Naive thymus-derived CD4-positive, alpha-beta T cell (primary cell): ENCODE measurements at regions of chr1 and their contacts with region 1.

Region 1: DNA sequence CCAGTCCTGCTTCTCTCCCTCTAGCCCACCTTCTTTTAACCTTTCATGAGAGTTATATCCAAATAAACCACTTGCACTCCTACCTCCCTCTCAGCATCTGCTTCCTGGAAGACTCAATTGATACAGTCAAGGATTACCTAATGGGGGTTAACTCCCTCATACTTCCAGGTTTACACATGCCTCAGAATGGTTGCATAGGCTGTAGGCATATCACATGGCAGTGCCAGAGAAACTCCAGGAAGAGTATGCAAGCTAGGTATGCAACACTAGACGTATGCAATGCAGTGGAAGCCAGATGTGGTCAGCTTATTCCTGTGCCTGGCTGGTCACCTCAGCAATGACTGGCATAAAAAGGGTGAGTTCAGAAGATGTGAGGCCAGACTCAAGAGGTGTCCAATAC is 32.7 kb upstream of the VANGL1 start:
- DNase-seq: no peak
- ATAC-seq: no peak
- H3K4me3 ChIP-seq: no peak overlapping the region
- H3K4me3 Mint-ChIP-seq: no peak overlapping the region
- H3K27ac ChIP-seq: no peak overlapping the region
- H3K27ac Mint-ChIP-seq: peak overlapping the region in 1 of 9 donors; percentile 14
- H3K4me1 ChIP-seq: no peaks in the 10 kb centered on the region
- H3K4me1 Mint-ChIP-seq: peaks cover 0 to 2% (median 0%) of the 10 kb centered on the region in 7 donors
- H3K27me3 ChIP-seq: no peaks in the 10 kb centered on the region
- H3K27me3 Mint-ChIP-seq: peaks cover 4 to 19% (median 12%) of the 10 kb centered on the region in 5 donors

Region 2: DNA sequence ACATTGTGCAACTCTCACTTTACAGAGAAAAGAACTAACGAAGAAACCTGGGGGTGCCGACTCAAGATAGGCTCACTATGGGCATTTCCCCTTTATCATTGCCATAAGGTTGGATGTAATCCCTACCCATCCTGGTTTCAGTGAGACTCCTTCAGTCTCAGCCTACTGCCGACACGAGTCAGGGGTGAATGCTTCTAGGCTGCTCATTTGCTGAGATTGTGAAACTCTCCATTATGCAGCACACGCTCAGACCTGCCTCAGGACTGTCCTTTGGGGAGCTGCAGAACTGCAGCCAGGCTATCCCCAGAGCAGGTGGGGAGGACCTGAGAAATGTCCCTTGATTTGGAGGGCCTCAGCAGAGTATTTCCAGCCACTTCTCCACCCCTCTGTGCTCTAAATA is 557.2 kb before region 1 on chr1:
- CTCF ChIA-PET with region 1: no interaction called
- POLR2A ChIA-PET with region 1: no interaction called
- intact Hi-C with region 1: no loop called
- DNase-seq: no peak
- ATAC-seq: peak; percentile 24
- H3K4me3 ChIP-seq: no peak overlapping the region
- H3K4me3 Mint-ChIP-seq: no peak overlapping the region
- H3K27ac ChIP-seq: no peak overlapping the region
- H3K27ac Mint-ChIP-seq: no peak overlapping the region
- H3K4me1 ChIP-seq: no peaks in the 10 kb centered on the region
- H3K4me1 Mint-ChIP-seq: peaks cover 0 to 5% (median 4%) of the 10 kb centered on the region in 7 donors
- H3K27me3 ChIP-seq: no peaks in the 10 kb centered on the region
- H3K27me3 Mint-ChIP-seq: peaks cover 0 to 12% (median 0%) of the 10 kb centered on the region in 5 donors

Region 3: DNA sequence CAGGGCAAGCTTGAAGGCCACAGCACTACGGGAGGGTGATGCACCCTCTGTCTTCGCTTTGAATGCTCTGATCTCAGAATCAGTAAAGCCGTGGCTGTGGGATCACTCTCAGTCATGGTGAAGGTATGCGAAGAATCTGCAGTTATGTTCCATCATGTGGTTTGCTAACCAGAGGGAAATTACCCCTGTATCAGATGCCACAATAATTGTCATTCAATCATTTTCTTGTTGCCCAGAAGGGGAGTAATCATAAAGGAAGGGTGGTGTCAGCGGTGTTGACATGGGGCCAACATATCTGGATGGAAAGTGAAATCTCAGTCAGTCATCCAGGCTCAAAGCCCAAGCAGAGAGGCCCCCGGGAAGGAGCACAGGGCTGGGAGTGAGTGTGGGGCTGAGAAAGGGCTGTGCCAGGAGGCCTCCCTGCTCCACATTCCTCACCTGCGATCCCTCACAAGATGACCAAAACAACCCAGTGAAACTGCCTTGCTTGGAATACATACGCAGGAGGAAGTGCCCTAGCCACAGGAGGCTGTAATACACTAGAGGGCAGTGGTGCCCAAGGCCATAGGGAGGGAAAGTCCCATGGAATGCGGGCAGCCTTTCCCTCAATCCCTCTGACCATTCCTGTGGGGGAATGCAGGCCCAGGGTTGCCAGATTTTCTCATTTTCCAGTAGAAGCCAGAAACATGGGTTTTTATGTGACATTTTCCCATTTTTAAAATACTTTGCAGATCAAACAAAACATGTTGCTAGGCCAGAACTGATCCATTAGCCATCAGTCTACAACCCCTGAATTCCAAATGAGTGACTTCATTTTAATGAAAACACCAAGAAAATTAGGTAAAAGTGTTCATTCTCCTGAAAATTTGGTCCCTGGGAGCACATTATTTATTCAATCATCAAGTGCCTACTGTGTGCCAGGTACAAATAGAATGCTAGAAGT is 63.0 kb before region 1 on chr1:
- CTCF ChIA-PET with region 1: no interaction called
- POLR2A ChIA-PET with region 1: no interaction called
- intact Hi-C with region 1: no loop called
- DNase-seq: no peak
- ATAC-seq: no peak
- H3K4me3 ChIP-seq: no peak overlapping the region
- H3K4me3 Mint-ChIP-seq: no peak overlapping the region
- H3K27ac ChIP-seq: no peak overlapping the region
- H3K27ac Mint-ChIP-seq: no peak overlapping the region
- H3K4me1 ChIP-seq: no peaks in the 10 kb centered on the region
- H3K4me1 Mint-ChIP-seq: no peaks in the 10 kb centered on the region
- H3K27me3 ChIP-seq: no peaks in the 10 kb centered on the region
- H3K27me3 Mint-ChIP-seq: peaks cover 0 to 15% (median 11%) of the 10 kb centered on the region in 5 donors

Region 4: DNA sequence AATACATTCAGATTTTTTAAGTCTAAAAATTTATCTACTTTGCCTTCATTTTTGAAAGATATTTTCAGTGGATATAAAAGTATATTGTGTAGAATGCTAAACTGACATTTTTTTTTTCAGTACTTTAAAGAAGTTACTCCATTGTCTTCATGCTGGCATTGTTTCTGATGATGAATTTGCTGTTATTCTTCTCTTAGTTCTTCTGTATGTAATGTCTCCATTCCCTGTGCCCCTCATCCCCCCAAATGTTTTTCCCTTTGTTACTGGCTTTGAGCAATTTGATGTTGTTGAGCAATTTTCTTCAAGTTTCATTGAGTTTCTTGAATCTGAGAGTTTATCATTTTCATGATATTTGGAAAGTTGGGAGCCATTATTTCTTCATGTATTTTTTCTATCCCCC is 11.9 kb after region 1 on chr1:
- CTCF ChIA-PET with region 1: no interaction called
- POLR2A ChIA-PET with region 1: no interaction called
- intact Hi-C with region 1: no loop called
- DNase-seq: no peak
- ATAC-seq: no peak
- H3K4me3 ChIP-seq: no peak overlapping the region
- H3K4me3 Mint-ChIP-seq: no peak overlapping the region
- H3K27ac ChIP-seq: no peak overlapping the region
- H3K27ac Mint-ChIP-seq: no peak overlapping the region
- H3K4me1 ChIP-seq: no peaks in the 10 kb centered on the region
- H3K4me1 Mint-ChIP-seq: no peaks in the 10 kb centered on the region
- H3K27me3 ChIP-seq: no peaks in the 10 kb centered on the region
- H3K27me3 Mint-ChIP-seq: peaks cover 0 to 25% (median 11%) of the 10 kb centered on the region in 5 donors

Region 5: DNA sequence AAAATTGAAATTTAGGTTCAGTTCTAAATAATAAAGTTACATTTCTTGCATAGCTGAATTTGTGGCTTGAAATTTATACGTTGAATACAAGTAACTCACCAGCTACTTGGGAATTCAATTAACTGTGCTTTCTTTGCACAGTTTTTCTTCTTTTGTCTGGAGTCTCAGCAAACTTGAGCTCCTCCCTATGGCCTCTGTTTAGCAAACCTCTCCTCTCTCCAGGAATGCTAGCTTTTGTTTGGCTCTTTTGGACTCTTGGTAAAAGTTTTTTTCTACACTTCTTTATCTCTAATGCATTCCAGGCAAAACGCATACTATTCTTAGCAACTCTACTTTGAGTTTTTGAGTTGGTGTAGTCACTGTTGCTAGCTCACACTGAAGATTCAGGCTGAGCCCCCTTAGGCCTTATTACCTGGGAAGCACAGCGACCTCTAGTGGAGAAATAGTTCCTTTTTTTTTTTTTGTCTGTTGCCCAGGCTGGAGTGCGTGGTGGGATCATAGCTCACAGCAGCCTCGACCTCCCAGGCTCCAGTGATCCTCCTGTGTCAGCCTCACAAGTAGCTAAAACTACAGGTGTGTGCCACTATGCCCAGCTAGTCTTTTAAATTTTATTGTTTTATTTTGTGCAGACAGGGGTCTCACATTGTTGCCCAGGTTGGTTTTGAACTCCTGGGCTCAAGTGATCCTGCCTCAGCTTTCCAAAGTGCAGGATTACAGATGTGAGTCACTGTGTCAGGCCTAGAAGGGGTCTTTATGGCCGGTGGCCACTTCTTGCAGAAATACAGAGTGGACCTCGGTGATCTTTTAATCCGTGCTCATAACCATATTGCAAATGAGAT is 97.8 kb after region 1 on chr1:
- CTCF ChIA-PET with region 1: no interaction called
- POLR2A ChIA-PET with region 1: no interaction called
- intact Hi-C with region 1: loop called (anchors 1 to 2 kb)
- DNase-seq: peak in 3 of 9 donors; percentile 4 to 32 (median 12)
- ATAC-seq: no peak
- H3K4me3 ChIP-seq: no peak overlapping the region
- H3K4me3 Mint-ChIP-seq: no peak overlapping the region
- H3K27ac ChIP-seq: no peak overlapping the region
- H3K27ac Mint-ChIP-seq: no peak overlapping the region
- H3K4me1 ChIP-seq: no peaks in the 10 kb centered on the region
- H3K4me1 Mint-ChIP-seq: no peaks in the 10 kb centered on the region
- H3K27me3 ChIP-seq: no peaks in the 10 kb centered on the region
- H3K27me3 Mint-ChIP-seq: peaks cover 11 to 25% (median 23%) of the 10 kb centered on the region in 5 donors

Region 6: DNA sequence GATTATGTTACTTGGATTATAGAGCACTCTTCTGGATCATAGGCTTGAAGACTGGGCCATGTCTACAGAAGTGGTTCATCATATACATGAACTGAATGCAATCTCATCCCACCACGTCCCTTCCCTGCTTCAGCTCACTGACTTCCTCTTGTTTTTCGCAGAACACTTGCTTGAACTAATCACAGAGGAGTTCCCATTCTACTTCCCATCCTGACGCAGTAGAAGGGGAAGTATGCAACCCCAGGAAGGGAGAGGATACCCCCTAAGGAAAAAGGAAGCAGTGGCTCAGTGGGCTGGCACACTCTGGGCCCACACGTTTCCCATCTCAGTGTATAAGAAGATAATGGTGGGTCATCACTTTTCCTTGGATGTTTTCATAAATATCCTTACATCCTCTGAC is 123.3 kb after region 1 on chr1:
- CTCF ChIA-PET with region 1: no interaction called
- POLR2A ChIA-PET with region 1: no interaction called
- intact Hi-C with region 1: no loop called
- DNase-seq: no peak
- ATAC-seq: no peak
- H3K4me3 ChIP-seq: no peak overlapping the region
- H3K4me3 Mint-ChIP-seq: no peak overlapping the region
- H3K27ac ChIP-seq: no peak overlapping the region
- H3K27ac Mint-ChIP-seq: no peak overlapping the region
- H3K4me1 ChIP-seq: no peaks in the 10 kb centered on the region
- H3K4me1 Mint-ChIP-seq: peaks cover 0 to 1% (median 0%) of the 10 kb centered on the region in 7 donors
- H3K27me3 ChIP-seq: no peaks in the 10 kb centered on the region
- H3K27me3 Mint-ChIP-seq: peaks cover 4 to 22% (median 14%) of the 10 kb centered on the region in 5 donors

Region 7: GRCh38 chr1:115771847-115772457 is 162.9 kb after region 1 on chr1:
- CTCF ChIA-PET with region 1: no interaction called
- POLR2A ChIA-PET with region 1: no interaction called
- intact Hi-C with region 1: loop called in 1 of 2 experiments (anchors 1 kb)
- DNase-seq: peak in 1 of 9 donors; percentile 21
- ATAC-seq: peak; percentile 60
- H3K4me3 ChIP-seq: no peak overlapping the region
- H3K4me3 Mint-ChIP-seq: no peak overlapping the region
- H3K27ac ChIP-seq: no peak overlapping the region
- H3K27ac Mint-ChIP-seq: no peak overlapping the region
- H3K4me1 ChIP-seq: no peaks in the 10 kb centered on the region
- H3K4me1 Mint-ChIP-seq: no peaks in the 10 kb centered on the region
- H3K27me3 ChIP-seq: no peaks in the 10 kb centered on the region
- H3K27me3 Mint-ChIP-seq: peaks cover 6 to 49% (median 21%) of the 10 kb centered on the region in 5 donors